ENCODE measurements at regions of chr14 and their contacts with region 1.

Region 1: DNA sequence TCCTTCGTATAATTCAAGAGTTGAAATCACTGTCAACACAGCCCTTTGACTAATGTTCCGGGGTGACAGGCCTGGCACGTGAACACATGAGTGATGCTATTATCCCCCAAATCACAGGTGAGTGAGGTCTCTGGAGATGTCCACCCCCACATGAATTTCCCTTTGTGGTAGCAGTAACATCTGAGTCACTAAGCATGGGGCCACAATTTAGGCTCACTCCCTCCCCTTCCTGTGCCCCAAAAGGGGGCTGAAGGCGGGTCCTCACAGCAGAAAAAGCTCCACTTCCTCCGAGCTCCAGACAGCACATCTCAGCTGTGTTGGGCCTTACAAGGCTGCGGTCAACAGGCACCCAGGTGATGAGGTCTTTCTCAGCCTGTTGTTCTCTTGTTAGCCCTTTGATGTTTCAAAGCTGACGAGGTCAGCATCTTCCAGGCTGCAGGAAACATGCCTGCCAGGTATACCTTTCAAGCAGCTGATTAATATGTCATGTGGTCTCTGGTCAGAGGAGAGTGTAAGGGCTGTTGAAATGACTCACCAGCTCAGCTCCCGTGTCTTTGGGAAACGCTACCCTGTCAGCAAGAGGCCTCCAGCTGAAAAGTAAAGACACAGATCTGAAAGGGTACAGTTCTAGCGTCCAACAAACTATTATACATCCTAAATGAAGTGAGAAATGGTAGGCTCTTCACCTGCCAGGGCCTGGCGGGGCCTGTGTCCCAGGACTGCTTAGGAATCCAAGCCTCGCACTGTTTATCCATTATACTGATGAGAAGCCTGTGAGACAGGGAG is 107.3 kb downstream of the ZFP36L1 start:
- DNase-seq: peak; percentile 98
- H3K4me3 ChIP-seq: peak overlapping the region; percentile 57
- H3K27ac ChIP-seq: peak overlapping the region; percentile 97
- H3K4me1 ChIP-seq: peaks cover 98% of the 10 kb centered on the region
- CTCF ChIP-seq: no peak

Region 2: DNA sequence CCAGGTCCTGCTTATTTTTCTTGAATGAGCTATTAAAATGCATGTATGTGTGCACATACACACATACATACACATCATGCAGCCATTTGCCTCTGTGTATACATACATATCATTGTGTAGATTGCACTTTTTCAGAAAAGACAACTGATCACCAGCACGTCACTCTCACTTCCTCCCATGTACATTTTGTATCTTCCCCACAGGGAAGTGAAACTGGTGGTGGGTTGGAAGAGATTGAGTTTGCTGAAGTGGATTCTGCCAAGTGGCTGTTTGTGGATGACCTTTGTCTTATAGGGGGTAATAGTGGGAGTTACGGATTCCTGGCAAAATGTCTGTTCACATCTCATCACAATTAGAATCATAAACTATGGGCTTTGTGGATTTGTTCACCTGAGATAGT is 417.4 kb before region 1 on chr14:
- CTCF ChIA-PET with region 1: no interaction called
- POLR2A ChIA-PET with region 1: no interaction called
- intact Hi-C with region 1: loop called (anchors 5 kb)
- DNase-seq: peak; percentile 93
- H3K4me3 ChIP-seq: peak overlapping the region; percentile 42
- H3K27ac ChIP-seq: peak overlapping the region; percentile 93
- H3K4me1 ChIP-seq: peaks cover 91% of the 10 kb centered on the region
- CTCF ChIP-seq: no peak

Region 3: GRCh38 chr14:68788996-68789820 is 103.6 kb after region 1 on chr14:
- CTCF ChIA-PET with region 1: interaction called, 6 read pairs
- POLR2A ChIA-PET with region 1: interaction called, 16 read pairs
- intact Hi-C with region 1: loop called (anchors 1 kb)
- DNase-seq: peak; percentile 89
- H3K4me3 ChIP-seq: peak overlapping the region; percentile 87
- H3K27ac ChIP-seq: peak overlapping the region; percentile 92
- H3K4me1 ChIP-seq: peaks cover 56% of the 10 kb centered on the region
- CTCF ChIP-seq: peak; percentile 90

Region 4: GRCh38 chr14:68795597-68796417 is 110.2 kb after region 1 on chr14:
- CTCF ChIA-PET with region 1: interaction called, 6 read pairs
- POLR2A ChIA-PET with region 1: interaction called, 16 read pairs
- intact Hi-C with region 1: loop called (anchors 1 kb)
- DNase-seq: peak; percentile 90
- H3K4me3 ChIP-seq: peak overlapping the region; percentile 87
- H3K27ac ChIP-seq: peak overlapping the region; percentile 92
- H3K4me1 ChIP-seq: peaks cover 39% of the 10 kb centered on the region
- CTCF ChIP-seq: peak; percentile 71

Region 5: GRCh38 chr14:68822132-68822651 is 136.6 kb after region 1 on chr14:
- CTCF ChIA-PET with region 1: no interaction called
- POLR2A ChIA-PET with region 1: no interaction called
- intact Hi-C with region 1: no loop called
- DNase-seq: peak; percentile 75
- H3K4me3 ChIP-seq: peak overlapping the region; percentile 51
- H3K27ac ChIP-seq: peak overlapping the region; percentile 32
- H3K4me1 ChIP-seq: peaks cover 61% of the 10 kb centered on the region
- CTCF ChIP-seq: no peak

Measured in OCI-LY7 (cell line).